Activated naive CD4-positive, alpha-beta T cell treated with anti-CD3 and anti-CD28 coated beads, Interleukin-2, amount 10 ng/mL, durations not matched to agents 7 days and 5 days (primary cell): ENCODE measurements at regions of chr1 and their contacts with region 1.

Region 1: GRCh38 chr1:159891275-159892157 is 8.4 kb downstream of the CFAP45 start:
- DNase-seq: peak; percentile 86
- H3K4me3 Mint-ChIP-seq: no peak overlapping the region
- H3K27ac Mint-ChIP-seq: no peak overlapping the region
- H3K4me1 Mint-ChIP-seq: peaks cover 16% of the 10 kb centered on the region
- H3K27me3 Mint-ChIP-seq: peaks cover 26% of the 10 kb centered on the region

Region 2: GRCh38 chr1:159780583-159781582 is 110.6 kb before region 1 on chr1 and contains the start of gene DUSP23:
- CTCF ChIA-PET with region 1: interaction called, 35 read pairs
- DNase-seq: peak; percentile 98
- H3K4me3 Mint-ChIP-seq: peak within 1 kb of the TSS; percentile 81
- H3K27ac Mint-ChIP-seq: peak within 1 kb of the TSS; percentile 25
- H3K4me1 Mint-ChIP-seq: peaks cover 32% of the 10 kb centered on the region
- H3K27me3 Mint-ChIP-seq: peaks cover 6% of the 10 kb centered on the region

Region 3: DNA sequence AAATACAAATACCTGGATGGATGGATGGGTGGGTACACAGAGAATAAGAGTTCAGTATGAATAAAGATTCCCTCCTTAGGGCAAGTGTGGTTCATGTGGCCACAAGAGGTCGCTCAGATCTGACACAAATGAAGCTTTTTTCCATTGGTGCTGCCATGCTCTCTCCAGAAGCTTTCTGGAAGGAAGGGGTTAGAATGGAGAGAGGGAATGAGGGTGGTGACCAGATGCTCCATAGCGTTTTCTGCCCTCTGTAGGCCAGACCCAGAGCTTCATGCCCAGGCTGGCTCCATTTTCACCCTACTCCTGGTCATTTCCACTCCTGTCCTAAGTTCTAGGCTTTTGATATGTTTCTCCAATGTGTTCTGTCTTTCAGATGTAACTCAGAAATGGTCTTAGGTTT is 92.6 kb before region 1 on chr1:
- CTCF ChIA-PET with region 1: interaction called, 430 read pairs
- DNase-seq: peak; percentile 64
- H3K4me3 Mint-ChIP-seq: no peak overlapping the region
- H3K27ac Mint-ChIP-seq: no peak overlapping the region
- H3K4me1 Mint-ChIP-seq: peaks cover 17% of the 10 kb centered on the region
- H3K27me3 Mint-ChIP-seq: peaks cover 53% of the 10 kb centered on the region

Region 4: GRCh38 chr1:159872881-159873280 is 18.6 kb before region 1 on chr1:
- CTCF ChIA-PET with region 1: interaction called, 11 read pairs
- DNase-seq: no peak
- H3K4me3 Mint-ChIP-seq: no peak overlapping the region
- H3K27ac Mint-ChIP-seq: no peak overlapping the region
- H3K4me1 Mint-ChIP-seq: peaks cover 3% of the 10 kb centered on the region
- H3K27me3 Mint-ChIP-seq: peaks cover 33% of the 10 kb centered on the region

Region 5: GRCh38 chr1:159945483-159946241 is 54.1 kb after region 1 on chr1 and contains the start of gene IGSF9:
- CTCF ChIA-PET with region 1: interaction called, 14 read pairs
- DNase-seq: peak; percentile 76
- H3K4me3 Mint-ChIP-seq: peak within 1 kb of the TSS; percentile 16
- H3K27ac Mint-ChIP-seq: peak within 1 kb of the TSS; percentile 42
- H3K4me1 Mint-ChIP-seq: peaks cover 11% of the 10 kb centered on the region
- H3K27me3 Mint-ChIP-seq: peaks cover 87% of the 10 kb centered on the region

Region 6: GRCh38 chr1:159960721-159961381 is 69.3 kb after region 1 on chr1:
- CTCF ChIA-PET with region 1: no interaction called
- DNase-seq: no peak
- H3K4me3 Mint-ChIP-seq: no peak overlapping the region
- H3K27ac Mint-ChIP-seq: no peak overlapping the region
- H3K4me1 Mint-ChIP-seq: no peaks in the 10 kb centered on the region
- H3K27me3 Mint-ChIP-seq: peaks cover 34% of the 10 kb centered on the region

Region 7: GRCh38 chr1:159987186-159987585 is 95.7 kb after region 1 on chr1:
- CTCF ChIA-PET with region 1: no interaction called
- DNase-seq: no peak
- H3K4me3 Mint-ChIP-seq: no peak overlapping the region
- H3K27ac Mint-ChIP-seq: no peak overlapping the region
- H3K4me1 Mint-ChIP-seq: peaks cover 12% of the 10 kb centered on the region
- H3K27me3 Mint-ChIP-seq: peaks cover 27% of the 10 kb centered on the region